GM23248 (cell line): ENCODE measurements at regions of chr21 and their contacts with region 1.

Region 1: GRCh38 chr21:36330904-36331303 is 10.9 kb downstream of the MORC3 start:
- DNase-seq: peak; percentile 71
- H3K4me3 ChIP-seq: no peak overlapping the region
- H3K27ac ChIP-seq: no peak overlapping the region
- H3K4me1 ChIP-seq: peaks cover 20% of the 10 kb centered on the region
- H3K27me3 ChIP-seq: no peaks in the 10 kb centered on the region

Region 2: DNA sequence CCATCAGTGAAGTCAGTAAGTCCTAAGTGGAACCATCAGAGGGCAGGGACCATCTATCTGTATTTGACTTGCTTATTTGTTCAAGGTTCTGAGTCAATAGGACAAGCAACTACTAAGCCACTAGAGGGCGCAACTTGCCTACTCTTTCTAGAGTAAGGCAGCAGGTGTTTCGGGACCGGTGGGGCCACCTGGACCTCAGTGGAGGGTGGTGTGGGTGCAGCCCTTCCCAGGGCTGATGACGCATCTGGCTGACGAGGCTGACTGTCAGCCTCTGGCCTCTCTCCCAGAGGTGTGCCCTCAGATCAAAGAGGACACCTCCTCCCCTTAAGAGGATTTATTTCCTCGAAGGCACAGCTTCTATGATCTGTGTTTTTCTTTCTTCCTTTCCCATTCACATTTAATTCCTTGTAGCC is 189.4 kb before region 1 on chr21:
- in situ Hi-C with region 1: loop called (anchors 10 kb)
- DNase-seq: peak; percentile 89
- H3K4me3 ChIP-seq: no peak overlapping the region
- H3K27ac ChIP-seq: no peak overlapping the region
- H3K4me1 ChIP-seq: 0 out of 2 replicates have a peak, but pooled peaks cover 4% of the 10 kb centered on the region
- H3K27me3 ChIP-seq: no peaks in the 10 kb centered on the region